ENCODE measurements at regions of chr20 and their contacts with region 1.

Region 1: GRCh38 chr20:47809111-47809912 is 24.0 kb upstream of the SULF2 start:
- DNase-seq: peak; percentile 98 to 99
- H3K4me3 ChIP-seq: peak overlapping the region; percentile 25; the same call in 1 of the 2 replicates
- H3K27ac ChIP-seq: peak overlapping the region; percentile 95
- H3K4me1 ChIP-seq: peaks cover 67% of the 10 kb centered on the region
- H3K27me3 ChIP-seq: no peaks in the 10 kb centered on the region
- CTCF ChIP-seq: no peak

Region 2: DNA sequence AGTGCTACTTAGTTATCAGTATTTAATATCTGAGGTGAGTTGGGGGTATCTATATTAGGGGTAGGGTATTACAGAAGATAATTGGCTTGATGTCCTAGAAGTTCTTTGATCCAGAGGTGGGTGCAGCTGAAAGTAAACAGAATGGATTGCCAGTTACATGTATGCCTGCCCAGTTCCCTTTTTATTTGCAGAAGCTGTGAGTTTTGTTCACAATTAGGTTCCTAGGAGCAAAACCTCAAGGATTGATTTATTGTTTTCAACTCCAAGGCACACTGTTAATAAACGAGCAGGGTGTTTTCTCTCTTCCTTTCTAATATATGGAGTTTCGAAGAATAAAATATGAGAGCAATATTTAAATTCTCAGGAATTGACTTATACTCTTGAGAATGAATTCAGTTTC is 153.0 kb before region 1 on chr20:
- CTCF ChIA-PET with region 1: no interaction called
- POLR2A ChIA-PET with region 1: no interaction called
- intact Hi-C with region 1: no loop called
- DNase-seq: no peak
- H3K4me3 ChIP-seq: no peak overlapping the region
- H3K27ac ChIP-seq: no peak overlapping the region
- H3K4me1 ChIP-seq: no peaks in the 10 kb centered on the region
- H3K27me3 ChIP-seq: no peaks in the 10 kb centered on the region
- CTCF ChIP-seq: no peak

Region 3: GRCh38 chr20:47792021-47792618 is 17.2 kb before region 1 on chr20:
- CTCF ChIA-PET with region 1: no interaction called
- POLR2A ChIA-PET with region 1: interaction called, 11 read pairs
- intact Hi-C with region 1: no loop called
- DNase-seq: peak; percentile 77 to 95
- H3K4me3 ChIP-seq: peak overlapping the region; percentile 54
- H3K27ac ChIP-seq: peak overlapping the region; percentile 95
- H3K4me1 ChIP-seq: peaks cover 90% of the 10 kb centered on the region
- H3K27me3 ChIP-seq: no peaks in the 10 kb centered on the region
- CTCF ChIP-seq: no peak

Region 4: DNA sequence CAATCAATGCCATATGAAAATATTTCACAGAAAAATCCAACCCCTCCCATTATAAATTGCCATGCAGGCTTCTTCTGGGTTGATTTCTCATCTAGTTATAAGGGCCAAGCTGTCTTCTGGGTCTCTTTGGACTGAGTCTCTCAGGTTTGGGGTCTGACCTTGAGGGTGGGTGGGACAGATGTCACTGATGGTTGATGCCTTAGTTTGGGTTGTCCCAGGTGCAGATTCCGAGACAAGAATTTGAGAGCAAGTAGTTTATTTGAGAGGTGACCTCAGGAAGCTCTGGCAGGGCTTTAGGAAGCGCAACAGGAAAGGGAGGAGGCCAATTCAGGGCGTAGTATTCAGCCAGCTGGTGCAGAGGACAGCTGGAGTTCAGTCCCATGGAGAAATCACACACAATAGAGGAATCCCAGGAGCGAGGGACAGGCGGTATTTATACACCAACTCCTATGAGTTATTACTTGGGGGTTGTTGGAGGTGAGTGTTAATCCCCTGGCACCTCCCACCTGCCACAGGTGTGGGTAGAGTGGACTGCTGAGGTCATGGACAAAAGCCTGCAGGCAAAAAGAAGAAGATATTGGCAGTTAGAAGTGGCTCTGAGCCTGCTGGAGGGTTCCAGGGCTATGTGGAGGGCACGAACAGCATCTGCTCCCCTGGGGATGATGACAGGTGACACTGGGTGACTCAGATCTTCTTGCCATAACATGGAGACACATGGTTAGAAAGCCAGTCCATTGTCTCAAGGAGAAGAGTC is 10.2 kb before region 1 on chr20:
- CTCF ChIA-PET with region 1: no interaction called
- POLR2A ChIA-PET with region 1: interaction called, 17 read pairs
- intact Hi-C with region 1: no loop called
- DNase-seq: peak; percentile 58 to 74
- H3K4me3 ChIP-seq: no peak overlapping the region
- H3K27ac ChIP-seq: peak overlapping the region; percentile 15
- H3K4me1 ChIP-seq: peaks cover 60% of the 10 kb centered on the region
- H3K27me3 ChIP-seq: no peaks in the 10 kb centered on the region
- CTCF ChIP-seq: no peak